PC-3 (cell line): ENCODE measurements at regions of chr18 and their contacts with region 1.

Region 1: GRCh38 chr18:9055185-9055584 is 47.3 kb upstream of the NDUFV2 start:
- DNase-seq: peak; percentile 90
- ATAC-seq: peak; percentile 96
- H3K4me3 ChIP-seq: no peak overlapping the region
- H3K27ac ChIP-seq: peak overlapping the region; percentile 33
- H3K4me1 ChIP-seq: peaks cover 16% of the 10 kb centered on the region
- H3K27me3 ChIP-seq: no peaks in the 10 kb centered on the region
- CTCF ChIP-seq: peak; percentile 71

Region 2: GRCh38 chr18:8882632-8883408 is 172.4 kb before region 1 on chr18:
- CTCF ChIA-PET with region 1: no interaction called
- POLR2A ChIA-PET with region 1: no interaction called
- intact Hi-C with region 1: loop called (anchors 2 kb)
- DNase-seq: peak; percentile 93
- ATAC-seq: peak; percentile 89
- H3K4me3 ChIP-seq: no peak overlapping the region
- H3K27ac ChIP-seq: peak overlapping the region; percentile 88
- H3K4me1 ChIP-seq: peaks cover 15% of the 10 kb centered on the region
- H3K27me3 ChIP-seq: no peaks in the 10 kb centered on the region
- CTCF ChIP-seq: peak; percentile 81

Region 3: GRCh38 chr18:8988261-8988871 is 66.8 kb before region 1 on chr18:
- CTCF ChIA-PET with region 1: interaction called, 5 read pairs
- POLR2A ChIA-PET with region 1: no interaction called
- intact Hi-C with region 1: loop called (anchors 1 kb)
- DNase-seq: peak; percentile 81
- ATAC-seq: peak; percentile 95
- H3K4me3 ChIP-seq: no peak overlapping the region
- H3K27ac ChIP-seq: no peak overlapping the region
- H3K4me1 ChIP-seq: no peaks in the 10 kb centered on the region
- H3K27me3 ChIP-seq: no peaks in the 10 kb centered on the region
- CTCF ChIP-seq: peak; percentile 94

Region 4: DNA sequence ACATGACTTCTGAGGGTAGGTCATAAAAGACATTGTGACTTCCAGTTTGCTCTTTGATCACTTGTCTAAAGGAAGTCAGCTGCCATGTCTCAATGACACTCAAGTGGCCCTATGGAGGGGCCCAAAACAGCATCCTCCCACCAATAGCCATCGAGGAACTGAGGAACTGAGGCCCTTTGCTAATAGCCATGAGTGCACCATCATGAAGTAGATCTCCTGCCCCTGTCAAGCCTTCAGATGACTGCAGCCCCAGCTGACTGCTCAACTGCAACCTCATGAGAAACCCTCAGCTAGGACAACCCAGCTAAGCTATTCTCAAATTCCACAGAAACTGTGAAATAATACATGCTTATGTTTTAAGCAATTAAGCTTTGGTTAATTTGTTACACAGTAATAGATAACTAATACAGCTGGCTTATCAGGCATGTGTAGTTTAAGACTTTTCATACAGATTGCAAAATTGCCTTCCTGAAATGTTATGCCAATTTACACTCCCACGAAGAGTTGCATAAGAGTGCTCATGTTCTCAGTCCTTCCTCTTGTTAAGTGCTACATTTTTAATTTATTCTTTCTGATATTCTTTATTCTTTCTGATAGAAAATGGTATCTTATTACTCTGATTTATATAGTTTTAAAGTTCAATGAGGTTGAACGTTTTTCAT is 58.3 kb before region 1 on chr18:
- CTCF ChIA-PET with region 1: interaction called, 4 read pairs
- POLR2A ChIA-PET with region 1: no interaction called
- intact Hi-C with region 1: loop called (anchors 2 kb)
- DNase-seq: no peak
- ATAC-seq: no peak
- H3K4me3 ChIP-seq: no peak overlapping the region
- H3K27ac ChIP-seq: 0 out of 2 replicates have a peak overlapping the region, but pooled peaks have one; percentile 2
- H3K4me1 ChIP-seq: peaks cover 20% of the 10 kb centered on the region
- H3K27me3 ChIP-seq: no peaks in the 10 kb centered on the region
- CTCF ChIP-seq: no peak

Region 5: GRCh38 chr18:9017170-9017904 is 37.8 kb before region 1 on chr18:
- CTCF ChIA-PET with region 1: no interaction called
- POLR2A ChIA-PET with region 1: no interaction called
- intact Hi-C with region 1: loop called (anchors 2 kb)
- DNase-seq: peak; percentile 97
- ATAC-seq: peak; percentile 92
- H3K4me3 ChIP-seq: peak overlapping the region; percentile 61
- H3K27ac ChIP-seq: peak overlapping the region; percentile 98
- H3K4me1 ChIP-seq: peaks cover 25% of the 10 kb centered on the region
- H3K27me3 ChIP-seq: no peaks in the 10 kb centered on the region
- CTCF ChIP-seq: no peak

Region 6: GRCh38 chr18:9025091-9025838 is 29.9 kb before region 1 on chr18:
- CTCF ChIA-PET with region 1: no interaction called
- POLR2A ChIA-PET with region 1: no interaction called
- intact Hi-C with region 1: loop called (anchors 2 kb)
- DNase-seq: peak; percentile 97
- ATAC-seq: peak; percentile 98
- H3K4me3 ChIP-seq: no peak overlapping the region
- H3K27ac ChIP-seq: no peak overlapping the region
- H3K4me1 ChIP-seq: peaks cover 20% of the 10 kb centered on the region
- H3K27me3 ChIP-seq: no peaks in the 10 kb centered on the region
- CTCF ChIP-seq: no peak